ENCODE measurements at regions of chr12 and their contacts with region 1.

Region 1: GRCh38 chr12:52380271-52380694 is 5.2 kb downstream of the KRT84 start:
- DNase-seq: peak in 1 of 2 donors; percentile 37
- ATAC-seq: peak in 4 of 8 donors; percentile 28 to 59 (median 48)
- H3K4me3 ChIP-seq: no peak overlapping the region
- H3K27ac ChIP-seq: no peak overlapping the region
- H3K4me1 ChIP-seq: no peaks in the 10 kb centered on the region
- H3K27me3 ChIP-seq: peaks cover 0 to 23% (median 7%) of the 10 kb centered on the region in 7 donors
- CTCF ChIP-seq: peak in 8 of 9 donors; percentile 13 to 56 (median 47)

Region 2: DNA sequence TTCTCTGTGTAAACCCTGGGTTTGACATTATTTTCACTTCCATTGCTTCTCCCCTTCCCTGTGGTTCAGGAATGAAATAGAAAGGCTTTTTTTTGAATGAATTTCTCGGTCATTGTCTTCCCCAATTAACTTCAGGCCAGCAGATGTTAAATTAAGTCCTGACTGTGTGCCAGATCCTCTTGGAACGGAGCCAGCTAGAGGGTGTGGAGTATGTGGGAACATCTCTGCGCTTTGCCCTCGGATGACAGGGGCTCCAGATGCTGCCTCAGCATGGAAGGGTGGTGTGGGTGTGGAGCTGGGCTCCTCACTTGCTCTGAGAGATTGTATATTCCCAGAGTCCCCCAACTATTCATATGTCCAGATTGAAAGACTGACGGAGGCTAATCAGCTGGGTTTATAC is 26.1 kb before region 1 on chr12:
- intact Hi-C with region 1: loop called in 1 of 10 experiments (anchors 1 kb)
- DNase-seq: no peak
- ATAC-seq: no peak
- H3K4me3 ChIP-seq: no peak overlapping the region
- H3K27ac ChIP-seq: no peak overlapping the region
- H3K4me1 ChIP-seq: peaks cover 0 to 6% (median 0%) of the 10 kb centered on the region in 9 donors
- H3K27me3 ChIP-seq: peaks cover 0 to 51% (median 35%) of the 10 kb centered on the region in 7 donors
- CTCF ChIP-seq: no peak

Region 3: GRCh38 chr12:52495389-52495788 is 115.1 kb after region 1 on chr12:
- intact Hi-C with region 1: loop called in 2 of 10 experiments (anchors 10 kb)
- DNase-seq: no peak
- ATAC-seq: no peak
- H3K4me3 ChIP-seq: no peak overlapping the region
- H3K27ac ChIP-seq: no peak overlapping the region
- H3K4me1 ChIP-seq: peaks cover 0 to 33% (median 6%) of the 10 kb centered on the region in 9 donors
- H3K27me3 ChIP-seq: peaks cover 0 to 32% (median 19%) of the 10 kb centered on the region in 7 donors
- CTCF ChIP-seq: no peak

Region 4: DNA sequence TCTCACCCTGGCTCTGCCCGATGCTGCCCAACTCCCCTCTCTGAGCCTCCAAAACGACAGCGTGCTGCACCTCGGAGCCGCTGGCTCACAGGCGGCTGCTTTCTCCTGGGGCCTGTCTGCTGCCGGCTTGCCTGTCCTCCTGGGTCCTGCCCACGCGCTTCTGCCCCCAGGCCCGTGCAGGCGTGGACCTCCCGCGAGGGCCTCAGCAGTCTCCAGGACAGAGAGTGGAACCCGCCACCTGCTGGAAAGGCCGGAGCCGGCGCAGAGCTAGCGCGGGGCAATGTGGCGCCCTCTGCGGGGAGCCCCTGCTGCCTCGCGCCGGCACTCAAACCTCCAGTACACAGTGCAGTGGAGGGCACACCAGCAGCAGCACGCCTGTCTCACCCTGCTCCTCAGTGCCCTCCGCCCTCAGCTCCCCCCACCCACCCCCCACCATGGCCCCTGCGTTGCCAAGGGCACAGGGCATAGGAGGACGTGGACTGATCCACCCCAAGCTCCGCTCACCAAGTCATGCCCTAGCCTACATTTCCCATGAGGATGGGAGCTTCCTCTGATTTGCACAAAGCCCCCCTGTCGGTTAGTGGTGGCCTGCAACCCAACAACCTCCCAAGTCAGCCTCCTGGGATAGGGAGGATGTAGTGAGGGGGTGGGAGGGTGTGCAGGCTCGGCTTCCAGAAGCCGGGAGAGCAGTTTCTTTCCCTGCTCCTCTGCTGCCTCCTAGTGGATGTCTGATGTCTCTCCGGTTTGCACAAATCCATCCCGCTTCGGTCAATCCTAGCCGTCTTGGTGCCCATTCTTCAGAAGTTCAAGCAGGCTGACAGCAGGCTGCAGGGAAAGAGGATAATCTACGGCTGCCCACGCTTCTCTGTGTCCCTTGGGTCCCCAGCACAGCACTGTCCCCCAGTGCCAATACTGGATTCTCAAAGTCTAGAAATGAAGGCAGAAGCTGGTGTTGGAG is 499.4 kb after region 1 on chr12:
- intact Hi-C with region 1: loop called in 3 of 10 experiments (anchors 2 to 10 kb)
- DNase-seq: peak; percentile 76 to 89
- ATAC-seq: peak; percentile 85 to 93 (median 90)
- H3K4me3 ChIP-seq: peak overlapping the region in 8 of 10 donors; percentile 4 to 36 (median 24)
- H3K27ac ChIP-seq: no peak overlapping the region
- H3K4me1 ChIP-seq: peaks cover 0 to 20% (median 12%) of the 10 kb centered on the region in 9 donors
- H3K27me3 ChIP-seq: peaks cover 0 to 25% (median 17%) of the 10 kb centered on the region in 7 donors
- CTCF ChIP-seq: peak; percentile 58 to 77 (median 65)

Measured in heart right ventricle (tissue), 16 donors.